Mammary epithelial cell (primary cell): ENCODE measurements at regions of chr5 and their contacts with region 1.

Region 1: DNA sequence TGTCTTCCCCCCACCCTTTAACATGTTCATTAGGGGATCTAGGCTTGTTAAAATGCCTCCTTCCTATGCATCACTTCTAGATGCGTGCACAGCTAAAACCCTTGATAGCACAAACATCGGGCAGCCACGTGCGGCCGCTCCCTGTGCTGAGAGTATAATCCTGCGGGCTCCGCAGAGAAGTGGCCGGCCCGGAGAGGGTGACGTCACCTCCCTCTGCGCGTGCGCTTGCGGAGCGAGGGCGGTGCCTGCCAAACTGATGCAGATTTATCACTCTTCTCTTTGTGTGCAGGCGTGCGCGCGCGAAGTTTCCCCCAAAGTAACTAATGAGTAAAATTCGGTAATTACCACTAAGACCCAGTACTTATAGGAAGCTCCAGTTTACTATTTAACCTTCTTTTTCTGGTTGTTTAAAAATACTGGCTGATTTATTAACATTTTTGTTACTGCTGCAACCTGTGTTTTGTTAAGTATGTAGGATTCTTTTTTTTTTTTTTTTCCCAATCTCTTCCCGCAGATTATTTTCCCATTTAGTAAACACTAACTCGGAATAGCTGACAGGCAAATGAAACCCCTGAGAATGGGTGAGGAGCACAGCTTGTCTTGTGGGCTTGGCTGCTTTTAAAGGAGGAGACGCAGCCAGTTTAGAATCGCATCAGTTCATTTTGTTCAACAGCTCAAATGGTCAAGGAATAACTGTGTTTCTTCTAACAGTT is 121.6 kb downstream of the TRIO start:
- DNase-seq: peak; percentile 91
- H3K4me3 ChIP-seq: peak overlapping the region; percentile 9 to 23 (median 20)
- H3K27ac ChIP-seq: peak overlapping the region; percentile 95
- H3K4me1 ChIP-seq: peaks cover 61% of the 10 kb centered on the region
- H3K27me3 ChIP-seq: no peaks in the 10 kb centered on the region
- CTCF ChIP-seq: no peak

Region 2: GRCh38 chr5:13987843-13988464 is 276.8 kb before region 1 on chr5:
- CTCF ChIA-PET with region 1: interaction called, 3 read pairs
- dilution Hi-C with region 1: no loop called
- in situ Hi-C with region 1: loop called (anchors 5 kb)
- intact Hi-C with region 1: no loop called
- DNase-seq: peak; percentile 49
- H3K4me3 ChIP-seq: no peak overlapping the region
- H3K27ac ChIP-seq: no peak overlapping the region
- H3K4me1 ChIP-seq: peaks cover 21% of the 10 kb centered on the region
- H3K27me3 ChIP-seq: no peaks in the 10 kb centered on the region
- CTCF ChIP-seq: peak; percentile 86 to 91

Region 3: DNA sequence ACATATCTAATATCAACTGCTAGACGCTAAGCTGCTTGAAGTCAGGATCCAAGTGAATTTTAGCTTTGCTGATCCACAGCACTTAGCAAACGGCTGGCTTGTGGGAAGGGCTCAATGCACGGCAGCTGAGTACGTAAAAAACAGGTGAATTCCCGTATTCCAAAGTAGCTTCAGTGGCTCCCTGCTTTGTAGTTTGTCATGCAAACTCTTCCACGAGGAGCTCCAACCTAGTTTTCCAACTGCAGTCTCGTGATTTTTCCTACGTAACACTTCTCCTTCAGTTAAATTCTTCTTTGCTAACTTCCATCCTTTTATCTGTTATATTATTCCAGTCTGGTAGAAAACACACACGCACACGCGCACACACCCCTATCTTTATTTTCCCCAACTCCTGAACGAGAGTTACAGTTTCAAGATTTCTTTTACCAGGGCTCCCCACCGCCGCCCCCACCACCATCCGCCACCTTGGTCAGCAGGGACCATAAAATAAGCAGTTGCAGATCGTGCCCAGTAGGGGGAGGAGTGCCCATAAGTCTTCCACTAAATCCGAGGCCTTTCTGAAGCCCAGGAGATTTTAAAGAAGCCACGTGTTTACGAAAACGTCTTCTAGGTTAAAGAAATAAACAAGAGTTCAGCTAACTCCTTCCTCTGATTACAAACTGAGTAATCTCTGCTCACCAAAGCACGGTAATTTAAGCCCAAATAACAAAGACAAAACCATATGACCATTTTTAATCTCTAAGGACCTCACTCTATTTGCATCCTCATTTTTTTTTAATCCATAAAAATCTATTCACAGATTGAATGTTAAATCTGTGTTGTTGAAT is 156.4 kb before region 1 on chr5:
- CTCF ChIA-PET with region 1: interaction called, 5 read pairs
- dilution Hi-C with region 1: no loop called
- in situ Hi-C with region 1: no loop called
- intact Hi-C with region 1: loop called (anchors 2 kb)
- DNase-seq: no peak
- H3K4me3 ChIP-seq: no peak overlapping the region
- H3K27ac ChIP-seq: peak overlapping the region; percentile 79
- H3K4me1 ChIP-seq: peaks cover 38% of the 10 kb centered on the region
- H3K27me3 ChIP-seq: no peaks in the 10 kb centered on the region
- CTCF ChIP-seq: peak in 1 of 2 donors; percentile 40

Region 4: DNA sequence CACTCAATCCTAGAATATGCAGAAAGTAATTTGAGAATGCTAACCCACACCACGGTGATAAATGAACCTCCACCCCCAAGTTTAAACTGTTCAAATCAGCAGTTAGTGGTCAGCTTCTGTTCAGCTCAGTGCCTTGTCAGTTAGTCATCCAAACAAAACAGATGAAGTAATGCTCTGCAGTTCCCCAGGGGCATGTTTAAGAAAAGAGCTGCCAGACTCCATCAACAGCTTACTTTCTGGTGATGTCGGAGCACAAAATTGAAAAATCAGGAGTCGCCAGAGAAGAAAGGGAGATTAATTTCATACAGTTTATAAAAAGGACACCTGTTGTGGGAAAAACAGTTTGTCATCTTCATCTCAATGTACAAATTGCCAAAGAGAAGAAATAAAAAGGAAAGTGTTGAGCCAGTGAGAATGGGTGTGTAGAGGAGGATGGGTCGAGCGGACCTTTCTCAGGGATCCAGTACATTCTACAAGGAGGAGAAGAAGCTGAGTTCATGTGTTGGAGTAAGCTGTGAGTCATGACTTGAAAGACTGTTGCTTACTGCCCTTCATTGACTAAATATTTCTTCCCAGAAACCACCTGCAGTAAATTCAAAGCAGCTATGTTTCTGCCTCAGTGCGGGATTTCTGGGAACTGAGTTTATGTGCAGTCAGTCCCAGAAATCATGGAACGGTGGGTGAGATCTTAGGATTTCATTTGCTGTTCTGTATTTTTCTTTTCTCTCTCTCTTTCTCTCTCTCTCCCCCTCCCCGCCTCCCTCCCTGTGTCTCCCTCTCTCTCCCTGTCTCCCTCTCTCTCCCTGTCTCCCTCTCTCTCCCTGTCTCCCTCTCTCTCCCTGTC is 107.9 kb before region 1 on chr5:
- CTCF ChIA-PET with region 1: no interaction called
- dilution Hi-C with region 1: no loop called
- in situ Hi-C with region 1: loop called in 1 of 2 experiments (anchors 10 kb)
- intact Hi-C with region 1: no loop called
- DNase-seq: peak; percentile 94
- H3K4me3 ChIP-seq: peak overlapping the region in 2 of 3 experiments; percentile 16 to 33
- H3K27ac ChIP-seq: peak overlapping the region; percentile 85
- H3K4me1 ChIP-seq: peaks cover 47% of the 10 kb centered on the region
- H3K27me3 ChIP-seq: no peaks in the 10 kb centered on the region
- CTCF ChIP-seq: no peak

Region 5: GRCh38 chr5:14168144-14168792 is 96.5 kb before region 1 on chr5:
- CTCF ChIA-PET with region 1: no interaction called
- dilution Hi-C with region 1: no loop called
- in situ Hi-C with region 1: no loop called
- intact Hi-C with region 1: no loop called
- DNase-seq: peak; percentile 63
- H3K4me3 ChIP-seq: no peak overlapping the region
- H3K27ac ChIP-seq: no peak overlapping the region
- H3K4me1 ChIP-seq: peaks cover 59% of the 10 kb centered on the region
- H3K27me3 ChIP-seq: no peaks in the 10 kb centered on the region
- CTCF ChIP-seq: no peak

Region 6: GRCh38 chr5:14190194-14191164 is 74.3 kb before region 1 on chr5:
- CTCF ChIA-PET with region 1: no interaction called
- dilution Hi-C with region 1: no loop called
- in situ Hi-C with region 1: no loop called
- intact Hi-C with region 1: loop called (anchors 2 kb)
- DNase-seq: peak; percentile 97
- H3K4me3 ChIP-seq: peak overlapping the region; percentile 24 to 28 (median 27)
- H3K27ac ChIP-seq: peak overlapping the region; percentile 97
- H3K4me1 ChIP-seq: peaks cover 62% of the 10 kb centered on the region
- H3K27me3 ChIP-seq: no peaks in the 10 kb centered on the region
- CTCF ChIP-seq: no peak

Region 7: DNA sequence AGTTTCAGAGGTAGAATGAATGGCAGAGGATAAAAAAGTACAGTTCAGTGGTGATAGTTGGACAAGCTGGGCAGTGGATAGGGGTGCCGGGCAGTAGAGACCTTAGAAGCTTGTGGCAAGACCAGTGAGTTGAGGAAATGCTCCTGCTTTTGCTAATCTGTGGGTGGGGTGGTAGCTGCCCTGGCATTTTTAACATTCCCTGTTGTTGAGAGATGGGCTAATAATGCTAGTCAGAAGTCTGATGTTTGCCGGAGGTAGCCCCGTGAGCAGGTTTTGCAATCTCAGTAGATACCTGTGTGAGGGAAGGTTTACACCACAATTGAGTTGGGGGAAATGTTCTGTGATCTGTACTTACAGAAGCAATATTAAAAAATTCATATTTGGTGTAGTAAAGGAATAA is 30.5 kb before region 1 on chr5:
- CTCF ChIA-PET with region 1: no interaction called
- dilution Hi-C with region 1: no loop called
- in situ Hi-C with region 1: no loop called
- intact Hi-C with region 1: loop called (anchors 1 kb)
- DNase-seq: peak; percentile 71
- H3K4me3 ChIP-seq: peak overlapping the region in 1 of 3 experiments; percentile 11
- H3K27ac ChIP-seq: peak overlapping the region; percentile 77
- H3K4me1 ChIP-seq: peaks cover 28% of the 10 kb centered on the region
- H3K27me3 ChIP-seq: no peaks in the 10 kb centered on the region
- CTCF ChIP-seq: no peak

Region 8: DNA sequence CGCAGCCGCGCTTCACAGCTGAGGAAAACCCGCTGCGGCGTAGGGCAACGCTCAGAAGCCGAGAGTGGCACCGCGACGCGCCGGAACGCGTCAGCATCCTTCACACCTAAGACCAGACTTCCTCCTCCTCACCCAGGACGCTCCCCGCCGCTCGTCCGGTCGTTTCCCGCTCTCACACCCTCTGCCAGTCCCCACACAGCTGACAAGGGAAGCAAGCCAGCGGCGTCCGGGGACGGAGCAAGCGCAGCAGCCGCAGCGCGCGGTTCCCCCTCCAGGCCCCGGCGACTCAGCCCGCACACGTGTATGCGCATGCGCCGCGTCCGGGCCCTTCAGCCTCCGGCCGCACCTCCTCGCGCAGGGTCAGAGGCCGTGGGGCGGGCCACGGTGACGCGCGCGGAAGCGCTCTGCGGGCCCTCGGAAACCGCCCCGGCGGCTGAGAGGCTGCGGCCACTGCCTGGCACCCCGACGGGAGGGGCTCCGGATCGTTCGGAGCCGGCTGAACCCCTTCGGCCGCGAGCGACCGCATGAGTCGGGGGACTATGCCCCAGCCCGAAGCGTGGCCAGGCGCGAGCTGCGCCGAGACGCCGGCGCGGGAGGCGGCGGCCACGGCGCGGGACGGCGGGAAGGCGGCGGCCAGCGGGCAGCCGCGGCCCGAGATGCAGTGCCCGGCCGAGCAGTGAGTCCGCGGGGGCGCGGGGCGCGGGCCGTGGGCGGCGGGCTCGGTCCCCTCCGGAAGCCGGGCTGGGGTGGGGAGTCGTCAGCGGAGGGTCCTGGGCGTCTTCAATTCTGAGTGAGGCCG is 399.7 kb after region 1 on chr5 and contains the start of gene OTULIN:
- CTCF ChIA-PET with region 1: no interaction called
- dilution Hi-C with region 1: no loop called
- in situ Hi-C with region 1: no loop called
- intact Hi-C with region 1: loop called (anchors 5 kb)
- DNase-seq: peak; percentile 91
- H3K4me3 ChIP-seq: peak within 1 kb of the TSS; percentile 68 to 81 (median 73)
- H3K27ac ChIP-seq: peak within 1 kb of the TSS; percentile 74
- H3K4me1 ChIP-seq: peaks cover 39% of the 10 kb centered on the region
- H3K27me3 ChIP-seq: no peaks in the 10 kb centered on the region
- CTCF ChIP-seq: no peak
- total RNA-seq, gene OTULIN: 45.6 to 56.0 TPM

Region 9: DNA sequence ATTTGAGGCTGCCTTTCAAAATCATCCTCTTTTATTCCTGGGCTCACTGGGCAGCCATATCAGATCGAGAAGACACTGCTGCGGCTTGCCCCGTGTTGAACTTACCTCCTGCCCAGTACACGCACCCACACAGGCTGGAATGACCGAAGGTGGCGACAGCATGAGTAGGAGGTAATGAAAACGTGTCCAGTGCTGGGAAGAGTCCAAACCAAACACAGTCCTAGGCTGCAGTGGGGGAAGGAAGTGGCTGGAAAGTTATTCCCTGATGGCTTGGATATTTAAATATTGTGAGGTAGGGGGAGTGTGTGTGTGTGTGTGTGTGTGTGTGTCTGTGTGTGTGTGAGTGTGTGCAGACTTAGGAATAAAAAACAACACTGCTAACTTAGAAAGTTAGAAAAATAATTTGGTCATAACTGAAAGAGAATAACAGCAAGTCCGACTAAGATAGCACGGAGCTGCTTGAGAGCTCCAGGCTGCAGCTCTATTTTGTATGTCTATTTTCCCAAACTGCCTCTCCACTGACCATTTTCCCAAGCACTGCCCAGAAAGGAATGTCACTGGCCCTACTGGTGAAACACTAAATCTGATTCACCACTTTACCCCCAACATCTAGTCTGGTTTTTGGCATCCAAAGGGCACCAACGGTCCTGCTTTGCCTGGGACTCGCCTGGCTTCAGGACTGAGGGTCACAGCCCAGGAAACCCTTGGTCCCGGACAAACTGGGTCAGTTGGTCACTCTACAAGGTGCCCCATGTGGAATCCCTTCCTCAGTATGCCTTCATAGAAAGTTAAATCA is 565.6 kb after region 1 on chr5:
- CTCF ChIA-PET with region 1: no interaction called
- dilution Hi-C with region 1: no loop called
- in situ Hi-C with region 1: no loop called
- intact Hi-C with region 1: no loop called
- DNase-seq: peak; percentile 12
- H3K4me3 ChIP-seq: no peak overlapping the region
- H3K27ac ChIP-seq: no peak overlapping the region
- H3K4me1 ChIP-seq: peaks cover 13% of the 10 kb centered on the region
- H3K27me3 ChIP-seq: no peaks in the 10 kb centered on the region
- CTCF ChIP-seq: no peak